ENCODE measurements at regions of chr3 and their contacts with region 1.

Region 1: DNA sequence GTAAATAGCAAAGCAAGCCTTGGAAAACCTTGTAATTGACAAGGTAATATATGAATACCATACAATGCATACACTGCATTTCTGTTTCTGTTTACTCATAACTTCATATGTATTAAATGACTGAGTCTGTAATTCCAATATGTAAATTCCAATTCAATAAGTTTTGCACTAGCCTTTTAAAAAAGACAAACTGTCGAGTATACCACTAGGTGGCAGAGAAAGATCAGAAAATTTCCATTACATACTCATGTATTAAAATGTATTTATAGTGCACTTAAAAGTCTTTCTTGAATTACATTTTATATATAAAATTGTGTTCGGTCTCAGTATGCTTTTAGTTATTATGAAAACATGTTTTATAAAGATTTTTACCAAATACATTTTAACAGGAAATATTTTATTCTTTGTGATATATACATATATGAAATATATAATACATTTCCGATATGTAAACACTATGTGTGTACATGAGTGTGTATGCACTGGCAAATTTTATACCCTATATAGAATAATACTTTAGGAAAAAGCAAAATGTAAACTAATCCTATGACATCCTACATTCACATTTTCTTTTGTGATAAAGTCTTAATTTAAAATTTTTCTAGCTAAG is 216.8 kb downstream of the VGLL3 start:
- DNase-seq: peak; percentile 12
- H3K4me3 ChIP-seq: no peak overlapping the region
- H3K27ac ChIP-seq: no peak overlapping the region
- H3K4me1 ChIP-seq: no peaks in the 10 kb centered on the region
- H3K27me3 ChIP-seq: no peaks in the 10 kb centered on the region
- CTCF ChIP-seq: peak; percentile 11
- POLR2A ChIP-seq: no peak

Region 2: DNA sequence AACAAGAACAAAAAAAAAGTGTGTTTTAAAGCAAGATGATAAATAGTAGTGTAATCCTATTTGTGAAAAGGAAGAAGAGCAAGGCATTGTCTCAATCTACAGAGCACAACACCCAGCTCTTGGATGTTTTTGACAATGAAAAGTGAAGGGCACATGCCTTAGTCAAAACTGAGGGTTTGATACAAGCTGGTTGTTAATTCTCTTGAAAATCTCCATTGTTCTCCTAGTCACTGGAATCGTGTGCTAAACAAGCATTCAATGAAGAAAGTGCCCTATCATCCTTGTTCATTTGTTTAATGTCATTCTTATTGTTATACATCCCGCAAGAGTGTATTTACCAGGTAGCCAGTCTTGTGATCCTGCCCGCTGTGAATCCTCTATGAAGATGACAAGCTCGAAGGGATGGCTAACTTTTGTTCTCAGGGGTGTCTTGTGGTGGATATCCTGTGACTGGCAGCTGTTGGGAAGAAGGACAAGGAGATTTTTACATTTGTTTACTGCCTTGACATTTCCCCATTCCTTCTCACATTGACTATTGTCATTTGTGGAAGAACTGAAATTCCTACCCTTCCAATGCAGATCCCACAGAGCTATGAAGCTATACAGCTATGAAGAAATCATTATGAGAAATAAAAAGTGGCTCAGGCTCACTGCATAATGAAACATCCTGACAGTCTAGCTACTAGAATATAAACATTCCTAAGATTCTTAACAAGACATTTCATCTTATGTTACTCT is 40.9 kb after region 1 on chr3:
- CTCF ChIA-PET with region 1: no interaction called
- POLR2A ChIA-PET with region 1: no interaction called
- dilution Hi-C with region 1: no loop called
- intact Hi-C with region 1: no loop called
- DNase-seq: no peak
- H3K4me3 ChIP-seq: no peak overlapping the region
- H3K27ac ChIP-seq: no peak overlapping the region
- H3K4me1 ChIP-seq: no peaks in the 10 kb centered on the region
- H3K27me3 ChIP-seq: no peaks in the 10 kb centered on the region
- CTCF ChIP-seq: no peak
- POLR2A ChIP-seq: no peak

Region 3: GRCh38 chr3:87145553-87145952 is 371.4 kb after region 1 on chr3:
- CTCF ChIA-PET with region 1: interaction called, 20 read pairs
- POLR2A ChIA-PET with region 1: no interaction called
- dilution Hi-C with region 1: no loop called
- intact Hi-C with region 1: no loop called
- DNase-seq: no peak
- H3K4me3 ChIP-seq: no peak overlapping the region
- H3K27ac ChIP-seq: no peak overlapping the region
- H3K4me1 ChIP-seq: no peaks in the 10 kb centered on the region
- H3K27me3 ChIP-seq: no peaks in the 10 kb centered on the region
- CTCF ChIP-seq: peak; percentile 11 to 22
- POLR2A ChIP-seq: no peak